Gastrocnemius medialis (tissue), 4 donors: ENCODE measurements at regions of chr22 and their contacts with region 1.

Region 1: GRCh38 chr22:17436382-17436980 is 67.2 kb downstream of the CECR2 start:
- DNase-seq: peak in 1 of 2 donors; percentile 33
- ATAC-seq: peak; percentile 48 to 66
- H3K4me3 ChIP-seq: peak overlapping the region; percentile 9 to 29 (median 26)
- H3K27ac ChIP-seq: peak overlapping the region; percentile 86 to 93 (median 90)
- H3K4me1 ChIP-seq: peaks cover 69 to 90% of the 10 kb centered on the region in 2 donors
- H3K27me3 ChIP-seq: no peaks in the 10 kb centered on the region
- CTCF ChIP-seq: no peak
- POLR2A ChIP-seq: no peak

Region 2: GRCh38 chr22:17375914-17376614 is 60.4 kb before region 1 on chr22:
- in situ Hi-C with region 1: no loop called
- intact Hi-C with region 1: loop called (anchors 2 kb)
- DNase-seq: peak; percentile 32 to 68
- ATAC-seq: peak; percentile 78 to 91
- H3K4me3 ChIP-seq: peak overlapping the region in 3 of 4 donors; percentile 0 to 21 (median 14)
- H3K27ac ChIP-seq: peak overlapping the region; percentile 91 to 99 (median 93)
- H3K4me1 ChIP-seq: peaks cover 76 to 79% of the 10 kb centered on the region in 2 donors
- H3K27me3 ChIP-seq: no peaks in the 10 kb centered on the region
- CTCF ChIP-seq: no peak
- POLR2A ChIP-seq: no peak

Region 3: GRCh38 chr22:17471886-17472535 is 35.5 kb after region 1 on chr22:
- in situ Hi-C with region 1: no loop called
- intact Hi-C with region 1: loop called (anchors 2 kb)
- DNase-seq: peak; percentile 24 to 65
- ATAC-seq: peak; percentile 43 to 63
- H3K4me3 ChIP-seq: no peak overlapping the region
- H3K27ac ChIP-seq: peak overlapping the region; percentile 88 to 90 (median 89)
- H3K4me1 ChIP-seq: peaks cover 75 to 86% of the 10 kb centered on the region in 2 donors
- H3K27me3 ChIP-seq: no peaks in the 10 kb centered on the region
- CTCF ChIP-seq: no peak
- POLR2A ChIP-seq: no peak

Region 4: DNA sequence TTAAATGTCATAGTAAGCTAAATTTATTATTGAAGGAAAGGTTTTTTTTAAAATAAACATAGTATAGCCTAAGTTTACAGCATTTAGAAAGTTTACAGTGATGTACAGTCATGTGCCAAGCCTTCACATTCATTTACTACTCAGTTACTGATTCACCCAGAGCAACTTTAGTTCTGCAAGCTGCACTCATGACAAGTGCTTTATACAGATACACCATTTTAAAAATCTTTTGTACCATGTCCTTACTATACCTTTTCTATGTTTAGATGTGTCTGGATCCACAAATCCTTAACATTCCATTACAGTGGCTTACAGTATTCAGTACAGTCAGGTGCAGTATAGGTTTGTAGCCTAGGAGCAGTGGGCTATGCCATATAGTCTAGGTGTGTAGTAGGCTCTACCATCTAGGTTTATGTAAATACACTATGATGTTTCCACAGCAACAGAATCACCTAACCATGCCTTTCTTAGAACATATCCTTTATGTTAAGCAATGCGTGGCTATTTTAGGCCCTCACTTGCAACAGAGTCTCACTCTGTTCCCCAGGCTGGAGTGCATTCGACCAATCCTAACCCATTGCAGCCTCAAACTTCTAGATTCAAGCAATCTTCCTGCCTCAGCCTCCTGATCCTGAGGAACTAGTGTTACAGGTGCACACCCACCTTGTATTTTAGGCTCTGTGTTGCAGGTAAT is 47.4 kb after region 1 on chr22:
- in situ Hi-C with region 1: no loop called
- intact Hi-C with region 1: no loop called
- DNase-seq: peak; percentile 54 to 76
- ATAC-seq: peak; percentile 97 to 99
- H3K4me3 ChIP-seq: no peak overlapping the region
- H3K27ac ChIP-seq: peak overlapping the region; percentile 80 to 88 (median 86)
- H3K4me1 ChIP-seq: peaks cover 28 to 29% of the 10 kb centered on the region in 2 donors
- H3K27me3 ChIP-seq: no peaks in the 10 kb centered on the region
- CTCF ChIP-seq: no peak
- POLR2A ChIP-seq: no peak